Aorta (tissue), 5 donors: ENCODE measurements at regions of chr22 and their contacts with region 1.

Region 1: GRCh38 chr22:49852898-49853894 is at the start of gene ZBED4:
- DNase-seq: peak; percentile 99 to 100
- ATAC-seq: peak; percentile 97
- H3K4me3 ChIP-seq: peak within 1 kb of the TSS; percentile 76 to 85
- H3K27ac ChIP-seq: peak within 1 kb of the TSS in 1 of 2 donors; percentile 74
- H3K4me1 ChIP-seq: no peaks in the 10 kb centered on the region
- H3K27me3 ChIP-seq: no peaks in the 10 kb centered on the region
- total RNA-seq, gene ZBED4: 8.6 to 9.7 TPM

Region 2: GRCh38 chr22:49917974-49918910 is 65.0 kb after region 1 on chr22 and contains the starts of genes ALG12 and CRELD2:
- intact Hi-C with region 1: loop called (anchors 1 to 5 kb)
- DNase-seq: peak; percentile 99
- ATAC-seq: peak; percentile 98
- H3K4me3 ChIP-seq: peak within 1 kb of the TSS; percentile 61 to 68
- H3K27ac ChIP-seq: peak within 1 kb of the TSS in 1 of 2 donors; percentile 56
- H3K4me1 ChIP-seq: no peaks in the 10 kb centered on the region
- H3K27me3 ChIP-seq: no peaks in the 10 kb centered on the region
- total RNA-seq, gene ALG12: 13.7 to 18.7 TPM
- total RNA-seq, gene CRELD2: 31.2 to 41.6 TPM